Left ventricle myocardium superior (tissue), 1 donor: ENCODE measurements at regions of chr15 and their contacts with region 1.

Region 1: DNA sequence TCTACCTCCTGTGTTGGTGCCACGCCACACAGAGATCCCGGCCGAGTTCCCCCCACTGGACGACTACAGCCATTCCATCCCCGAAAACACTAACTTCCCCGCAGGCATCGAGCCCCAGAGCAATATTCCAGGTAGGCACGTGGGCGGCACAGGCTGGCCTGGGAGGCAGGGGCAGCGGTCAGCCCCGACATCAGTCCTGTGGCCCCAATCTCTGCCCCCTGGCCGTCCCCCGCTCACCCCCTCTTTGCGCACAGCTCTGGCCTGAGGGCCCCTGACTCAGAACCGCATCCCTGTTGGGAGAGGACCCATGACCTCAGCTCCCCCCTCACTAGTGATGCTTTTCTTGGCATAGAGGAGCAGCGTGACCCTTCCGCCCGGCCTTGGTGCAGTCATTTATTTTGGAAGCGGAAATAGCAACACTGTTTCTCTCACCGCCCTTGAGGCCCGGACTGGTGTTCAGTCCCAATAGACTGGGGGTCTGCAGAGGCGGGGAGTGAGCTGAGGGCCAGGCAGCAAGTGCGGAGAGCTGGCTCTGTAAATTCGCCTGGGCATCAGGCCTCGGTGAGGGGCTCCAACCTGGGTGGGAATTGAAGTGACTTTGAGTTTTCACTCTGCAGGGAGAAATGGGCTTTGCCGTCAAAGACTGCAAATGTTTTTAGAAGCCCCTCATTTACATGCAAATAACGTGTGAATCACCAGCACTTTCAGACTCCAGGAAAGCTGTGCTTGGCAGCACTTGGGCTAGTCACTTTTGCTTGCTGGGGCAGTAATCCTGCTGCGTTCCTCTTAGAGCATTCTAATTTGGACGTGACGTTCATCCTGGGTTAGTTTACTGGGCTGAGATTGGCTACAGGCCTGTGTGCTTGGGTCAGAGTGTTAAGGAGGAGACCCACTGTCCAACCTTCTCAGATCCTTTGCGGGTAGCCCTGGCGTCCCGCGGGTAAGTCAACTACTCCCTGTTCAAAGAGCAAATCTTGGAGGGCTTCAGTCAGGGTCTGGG is 88.9 kb downstream of the AAGAB start:
- DNase-seq: peak; percentile 62
- ATAC-seq: peak; percentile 58

Region 2: DNA sequence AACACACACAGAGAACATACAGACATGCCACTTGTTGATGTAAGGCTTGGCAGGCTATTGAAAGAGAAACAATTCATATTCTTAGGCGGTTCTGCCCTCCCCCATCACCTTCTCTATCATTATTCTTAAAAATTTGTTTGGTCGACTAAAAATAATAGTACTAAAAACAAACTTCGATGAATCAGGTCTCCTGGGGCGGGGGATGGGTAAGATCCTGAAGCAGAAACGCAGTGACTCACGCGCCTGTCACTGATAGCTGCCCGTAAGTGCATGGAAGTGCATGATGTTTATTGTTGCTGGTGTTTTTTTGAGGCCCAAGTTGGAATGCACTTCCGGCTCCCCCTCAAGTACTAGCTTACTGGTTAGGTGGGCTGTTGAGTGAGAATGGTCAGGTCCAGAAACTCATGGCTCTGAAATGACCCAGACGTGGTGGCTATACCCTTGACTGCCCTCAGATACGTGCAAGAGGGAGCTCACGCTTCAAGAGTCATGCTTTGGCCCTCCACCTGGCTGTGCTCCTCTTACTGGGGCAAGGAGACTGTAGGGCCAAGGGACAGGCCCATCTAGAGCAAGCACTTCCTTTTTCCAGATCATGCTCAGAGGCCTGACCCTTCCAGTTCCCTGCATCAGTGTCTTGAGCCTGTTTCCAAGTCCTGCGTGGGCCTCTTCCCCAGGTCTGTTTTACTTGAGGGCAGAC is 89.3 kb before region 1 on chr15:
- intact Hi-C with region 1: loop called (anchors 10 kb)
- DNase-seq: no peak
- ATAC-seq: no peak

Region 3: DNA sequence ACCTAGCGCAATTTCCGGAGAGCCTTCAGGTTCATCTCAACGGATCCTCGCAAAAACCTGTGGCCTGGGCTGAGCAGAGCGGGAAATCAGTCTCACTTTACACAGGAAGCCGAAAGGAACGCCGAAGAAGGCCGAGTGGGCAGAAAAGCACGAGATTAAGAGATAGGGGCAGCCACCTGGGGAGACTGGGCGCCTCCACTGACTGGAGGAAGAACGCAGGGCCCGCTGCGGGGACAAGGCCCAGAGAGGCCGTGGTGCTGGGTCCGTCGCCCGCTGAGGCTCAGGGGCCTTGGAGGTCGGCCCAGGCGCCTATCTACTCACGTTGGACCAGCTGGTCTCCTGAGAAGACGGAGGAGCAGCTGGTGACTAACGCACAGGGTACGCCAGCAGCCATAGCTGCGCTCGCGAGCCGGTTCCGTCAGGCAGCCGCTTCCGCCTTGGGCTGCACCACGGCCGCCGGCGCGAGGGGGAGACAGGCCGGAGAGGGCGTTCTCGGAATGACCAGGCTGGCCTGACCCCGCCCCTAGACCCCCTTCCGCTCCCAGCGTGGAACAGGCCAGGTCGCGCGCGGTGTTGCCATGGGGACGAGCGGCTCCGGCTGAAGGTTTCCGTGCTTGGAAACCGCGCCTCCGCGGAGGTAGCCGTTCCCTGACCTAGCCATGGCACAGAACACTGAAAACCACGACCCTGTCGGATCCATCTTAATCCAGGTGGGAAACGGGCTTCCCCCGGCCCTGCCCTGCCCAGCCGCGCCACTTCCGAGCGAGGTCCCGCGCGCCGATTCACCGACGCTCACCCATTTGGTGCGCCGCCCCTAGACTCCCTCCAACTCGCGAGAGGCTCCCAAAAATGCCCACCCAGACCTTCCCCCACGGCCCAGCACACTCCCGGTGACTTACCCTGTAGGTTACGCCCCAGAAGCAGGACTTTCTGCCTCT is 89.0 kb after region 1 on chr15 and contains the starts of genes AAGAB and IQCH:
- intact Hi-C with region 1: loop called (anchors 10 kb)
- DNase-seq: peak; percentile 99
- ATAC-seq: peak; percentile 100
- total RNA-seq, gene AAGAB: 15.7 TPM
- total RNA-seq, gene IQCH: 0.64 TPM